Left colon (tissue), 2 donors: ENCODE measurements at regions of chr4 and their contacts with region 1.

Region 1: DNA sequence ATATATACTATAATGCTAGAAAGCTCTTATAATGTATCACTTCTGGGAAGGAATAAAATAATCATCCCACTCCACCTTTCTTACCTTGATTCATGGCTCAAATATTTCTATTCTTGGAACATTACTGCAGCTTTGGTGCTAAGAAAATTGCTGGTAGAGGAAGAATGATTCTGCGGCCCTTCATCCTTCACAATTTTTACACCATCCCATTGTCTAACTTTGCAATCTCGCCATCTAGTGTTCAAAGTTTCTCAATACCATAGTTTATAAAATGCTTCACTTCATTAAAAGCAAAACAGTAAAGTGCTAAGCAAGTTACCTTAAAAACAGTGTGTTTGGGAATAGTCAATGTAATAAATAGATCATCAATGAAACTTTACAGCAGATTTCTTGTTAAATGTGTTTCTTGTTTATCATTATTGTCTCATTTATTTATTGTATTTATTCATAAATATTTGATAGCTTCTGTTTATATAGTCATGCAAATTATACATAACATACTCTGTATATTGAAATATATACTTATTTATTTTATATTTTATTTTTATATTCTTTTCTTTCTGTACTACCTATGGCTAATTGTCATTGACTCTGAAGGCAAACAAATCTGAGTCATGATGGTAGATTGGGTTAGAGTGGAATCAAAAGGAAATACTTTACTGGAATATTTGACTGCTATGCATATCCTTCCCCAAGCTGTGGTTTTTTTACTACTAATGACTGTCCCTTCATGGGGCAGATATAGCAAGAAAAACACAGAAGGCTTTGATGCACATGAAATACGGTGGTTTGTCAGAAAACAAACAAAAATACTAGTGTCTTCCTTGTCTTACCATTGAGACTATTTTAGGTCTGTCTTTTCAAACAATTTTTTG is 390.7 kb downstream of the MAPK10 start:
- DNase-seq: no peak
- ATAC-seq: peak; percentile 63

Region 2: DNA sequence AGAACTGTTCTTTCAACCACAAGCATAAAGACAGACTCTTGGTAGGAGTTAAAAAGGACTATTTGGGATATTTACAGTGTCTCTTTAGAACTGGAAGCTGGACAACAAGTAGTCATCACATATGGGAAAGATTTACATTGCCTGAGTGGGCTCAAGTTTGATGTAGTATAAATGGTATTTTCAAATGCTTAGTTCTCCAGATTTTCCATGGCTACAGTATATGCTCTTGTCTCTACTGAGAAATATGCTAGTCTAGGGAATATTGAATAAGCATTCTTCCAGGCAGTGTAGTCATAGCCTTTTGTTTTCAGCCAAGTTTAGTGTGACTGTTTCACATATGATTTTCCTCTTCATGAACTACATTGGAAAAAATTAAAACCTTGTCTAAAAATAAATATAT is 178.6 kb before region 1 on chr4:
- intact Hi-C with region 1: loop called in 1 of 2 experiments (anchors 10 kb)
- DNase-seq: no peak
- ATAC-seq: no peak

Region 3: DNA sequence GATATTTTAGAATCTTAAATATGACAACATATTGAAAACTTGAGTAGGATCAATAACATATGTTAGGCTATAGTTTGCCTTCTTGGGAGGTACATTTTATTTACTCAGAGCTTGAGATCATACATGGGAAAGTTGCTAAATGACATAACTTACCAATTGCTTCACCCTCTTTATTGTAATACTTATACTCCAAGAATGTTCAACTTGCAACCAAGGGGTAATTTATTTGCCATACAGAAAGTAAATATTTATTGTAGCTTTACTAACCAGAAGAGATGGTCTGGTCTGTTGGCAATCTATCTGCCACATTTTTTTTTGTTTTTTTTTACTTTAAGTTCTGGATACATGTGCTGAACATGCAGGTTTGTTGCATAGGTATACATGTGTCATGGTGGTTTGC is 67.7 kb before region 1 on chr4:
- intact Hi-C with region 1: no loop called
- DNase-seq: no peak
- ATAC-seq: no peak